ENCODE measurements at regions of chr7 and their contacts with region 1.

Region 1: GRCh38 chr7:19117091-19117869 is at the start of gene TWIST1:
- DNase-seq: peak; percentile 22 to 41
- ATAC-seq: peak; percentile 72 to 75
- H3K4me3 ChIP-seq: peak within 1 kb of the TSS; percentile 62
- H3K27ac ChIP-seq: peak within 1 kb of the TSS; percentile 42 to 82
- H3K4me1 ChIP-seq: no peaks in the 10 kb centered on the region
- CTCF ChIP-seq: no peak
- EP300 ChIP-seq: no peak
- POLR2A ChIP-seq: no peak
- RAD21 ChIP-seq: no peak
- polyA plus RNA-seq, gene TWIST1: 0.61 and 0.75 TPM in 2 replicates

Region 2: GRCh38 chr7:18693406-18693805 is 423.9 kb before region 1 on chr7:
- CTCF ChIA-PET with region 1: interaction called, 11 read pairs
- POLR2A ChIA-PET with region 1: interaction called, 5 read pairs
- DNase-seq: peak in 1 of 2 experiments; percentile 39
- ATAC-seq: no peak
- H3K4me3 ChIP-seq: no peak overlapping the region
- H3K27ac ChIP-seq: no peak overlapping the region
- H3K4me1 ChIP-seq: no peaks in the 10 kb centered on the region
- CTCF ChIP-seq: no peak; the same call in 2 of the 3 replicates
- EP300 ChIP-seq: no peak
- POLR2A ChIP-seq: no peak
- RAD21 ChIP-seq: 0 out of 5 replicates have a peak, but pooled peaks have one; percentile 11 to 28

Region 3: GRCh38 chr7:19442016-19442785 is 324.9 kb after region 1 on chr7:
- CTCF ChIA-PET with region 1: interaction called, 25 read pairs
- POLR2A ChIA-PET with region 1: no interaction called
- DNase-seq: peak; percentile 3 to 55
- ATAC-seq: peak; percentile 96 to 97
- H3K4me3 ChIP-seq: no peak overlapping the region
- H3K27ac ChIP-seq: no peak overlapping the region
- H3K4me1 ChIP-seq: no peaks in the 10 kb centered on the region
- CTCF ChIP-seq: peak; percentile 49
- EP300 ChIP-seq: no peak
- POLR2A ChIP-seq: no peak
- RAD21 ChIP-seq: peak; percentile 64 to 83

Measured in A549 (cell line).